RWPE1 (cell line): ENCODE measurements at regions of chr14 and their contacts with region 1.

Region 1: DNA sequence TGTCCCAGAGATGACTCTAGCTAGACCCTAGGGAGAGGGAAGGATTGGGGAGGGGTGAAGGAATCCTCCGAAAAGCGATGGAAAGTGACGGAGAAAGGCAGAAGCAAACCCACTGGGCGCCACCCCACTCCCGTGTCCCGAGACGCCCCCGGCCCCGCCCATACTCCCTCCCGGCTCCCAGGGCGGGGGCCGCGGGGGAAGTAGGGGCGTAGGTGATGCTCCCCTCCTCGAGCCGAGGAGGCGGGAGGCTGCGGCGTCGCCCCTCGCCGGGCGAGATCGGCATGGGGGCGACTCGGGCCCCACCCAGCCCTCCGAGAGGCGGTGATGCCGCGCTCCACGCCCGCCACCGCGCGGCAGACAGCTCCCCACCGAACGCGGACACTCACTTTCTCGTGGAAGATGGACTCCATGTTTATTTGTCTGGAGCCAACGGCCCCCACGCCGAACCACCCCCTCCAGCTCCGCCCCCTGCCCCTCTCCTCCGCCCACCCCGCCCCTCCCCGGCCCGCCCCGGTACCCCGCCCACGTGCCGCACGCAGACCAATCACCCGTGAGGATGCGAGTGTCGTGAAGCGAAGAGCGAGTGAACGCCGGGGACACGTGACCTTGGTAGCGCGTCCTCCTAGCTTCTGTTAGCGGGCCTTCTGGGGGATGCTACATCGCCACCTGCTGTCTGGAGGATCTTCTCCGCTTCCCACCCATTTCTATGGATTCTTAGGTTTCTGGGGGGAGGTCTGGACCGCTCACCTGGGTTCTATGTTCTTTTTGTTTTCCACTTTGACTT is at the start of gene ATXN3:
- DNase-seq: peak; percentile 97
- H3K27ac ChIP-seq: peak within 1 kb of the TSS; percentile 91
- CTCF ChIP-seq: peak; percentile 91

Region 2: DNA sequence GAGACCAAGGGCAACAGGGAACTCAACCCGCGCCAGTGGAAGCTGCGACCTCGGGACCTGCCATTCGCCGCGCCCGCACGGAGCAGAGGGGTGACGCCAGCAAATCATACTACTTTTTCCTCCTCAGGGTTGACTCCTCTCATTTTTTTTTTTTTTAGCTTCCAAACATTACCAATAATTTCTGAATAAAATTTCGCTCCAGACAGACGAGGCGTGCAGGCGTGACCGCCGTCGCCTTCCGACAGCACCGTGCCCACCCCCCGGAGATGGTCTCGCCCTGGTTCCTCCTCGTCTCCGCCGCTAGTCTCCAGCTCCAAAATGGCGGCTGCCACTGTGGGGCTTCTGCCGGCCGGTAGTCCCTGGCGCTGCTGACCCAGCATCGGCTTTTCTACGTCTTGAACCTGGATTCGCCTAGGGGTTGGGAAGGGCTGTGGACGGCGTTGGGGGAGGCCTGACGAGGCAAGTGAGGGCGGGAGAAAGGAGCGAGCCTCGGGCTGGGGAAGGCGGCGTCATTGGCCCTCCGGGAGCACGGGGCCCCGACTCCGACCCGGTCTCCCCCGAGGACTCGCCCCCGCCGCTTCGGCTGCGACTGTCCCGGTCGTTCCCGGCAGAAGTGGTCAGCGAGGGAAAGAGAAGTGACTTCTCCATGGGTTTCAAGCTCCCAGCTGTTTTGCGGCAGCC is 15.5 kb after region 1 on chr14 and contains the starts of genes CPSF2 and NDUFB1:
- CTCF ChIA-PET with region 1: interaction called, 18 read pairs
- POLR2A ChIA-PET with region 1: no interaction called
- DNase-seq: peak; percentile 90
- H3K27ac ChIP-seq: peak within 1 kb of the TSS; percentile 86
- CTCF ChIP-seq: no peak